ENCODE measurements at regions of chr2 and their contacts with region 1.

Region 1: DNA sequence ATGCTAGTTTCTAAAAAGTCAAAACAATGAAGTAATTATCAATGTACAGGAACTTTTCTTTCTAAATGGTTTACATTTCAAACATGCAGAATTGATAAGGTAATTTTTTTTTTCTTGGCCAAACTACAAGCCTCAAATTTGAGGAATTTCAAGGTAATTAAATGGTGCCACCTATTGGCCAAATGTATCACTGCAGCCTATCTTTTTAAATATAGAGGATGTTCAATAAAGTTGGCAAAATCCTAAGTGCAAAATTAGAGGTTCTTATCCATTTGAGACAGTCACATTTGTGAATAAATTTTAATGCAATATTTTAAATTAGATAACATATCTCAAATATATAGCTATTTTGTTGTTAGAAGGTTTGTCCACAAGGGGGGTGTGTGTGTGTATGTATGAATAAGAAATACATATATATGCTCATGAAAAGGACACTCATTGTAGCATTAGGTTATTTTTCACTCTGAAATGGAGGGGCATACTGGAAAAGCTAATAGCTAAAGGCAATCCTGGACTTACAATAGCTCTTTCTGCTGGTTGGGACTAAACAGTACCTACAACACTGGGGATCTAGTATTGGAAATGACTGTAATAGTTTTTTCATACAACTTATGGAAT is 26.2 kb downstream of the MMADHC start:
- DNase-seq: no peak
- H3K4me3 ChIP-seq: no peak overlapping the region
- CTCF ChIP-seq: peak; percentile 41

Region 2: DNA sequence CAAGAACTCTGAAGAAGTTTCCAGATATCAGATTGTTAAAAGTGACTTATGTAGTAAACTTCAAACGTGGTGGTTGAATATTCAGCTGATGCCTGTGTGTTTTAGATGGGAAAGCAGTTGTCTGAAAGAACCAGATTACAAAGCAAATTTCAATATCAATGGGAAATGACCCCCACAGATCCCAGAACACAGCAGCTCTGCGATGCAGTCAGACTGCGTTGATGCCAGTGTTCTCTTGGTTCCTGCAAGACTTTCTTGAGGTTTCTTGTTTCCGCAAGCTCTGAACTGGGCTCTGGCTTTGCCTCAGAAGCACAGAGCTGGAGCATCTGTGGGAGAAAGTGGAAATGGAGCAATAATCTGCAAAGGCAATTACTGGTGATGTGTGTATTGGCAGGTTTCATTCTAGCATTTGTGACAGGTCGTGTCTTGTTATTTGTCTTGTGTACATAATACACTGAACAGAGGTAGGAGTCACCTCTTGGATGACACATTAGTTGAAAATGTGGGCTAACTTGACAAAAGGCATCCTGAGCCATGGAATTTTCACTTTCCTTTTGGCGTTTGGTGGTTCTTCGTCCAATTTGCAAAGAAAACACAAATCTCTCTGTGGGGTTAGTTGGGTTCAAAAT is 533.7 kb before region 1 on chr2:
- CTCF ChIA-PET with region 1: interaction called, 180 read pairs
- POLR2A ChIA-PET with region 1: no interaction called
- DNase-seq: no peak
- H3K4me3 ChIP-seq: no peak overlapping the region
- CTCF ChIP-seq: no peak

Region 3: GRCh38 chr2:149330126-149331022 is 231.0 kb before region 1 on chr2 and contains the start of gene LYPD6:
- CTCF ChIA-PET with region 1: interaction called, 10 read pairs
- POLR2A ChIA-PET with region 1: interaction called, 3 read pairs
- DNase-seq: no peak
- H3K4me3 ChIP-seq: peak within 1 kb of the TSS; percentile 71
- CTCF ChIP-seq: no peak

Region 4: DNA sequence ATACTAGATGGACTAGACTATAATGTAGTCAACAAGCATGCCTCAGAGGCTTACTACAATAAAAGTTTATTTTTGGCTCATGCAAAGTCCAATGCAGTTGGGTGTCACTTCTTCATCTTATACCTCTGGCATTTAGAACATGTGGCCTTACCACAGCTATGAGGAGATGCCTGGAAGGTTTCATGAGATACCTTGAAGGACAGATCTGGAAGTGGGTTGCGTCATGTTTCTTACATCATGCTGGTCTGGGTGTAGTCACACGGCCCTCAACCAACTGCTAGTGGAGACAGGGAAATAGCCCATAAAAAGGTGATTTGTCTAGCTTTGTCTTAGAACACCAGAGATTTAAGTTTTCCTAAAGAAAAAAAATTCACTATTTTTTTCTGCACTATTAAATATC is 117.9 kb after region 1 on chr2:
- CTCF ChIA-PET with region 1: no interaction called
- POLR2A ChIA-PET with region 1: no interaction called
- DNase-seq: peak; percentile 47
- H3K4me3 ChIP-seq: no peak overlapping the region
- CTCF ChIP-seq: no peak

Measured in AG04449 (cell line).